ENCODE measurements at regions of chr2 and their contacts with region 1.

Region 1: DNA sequence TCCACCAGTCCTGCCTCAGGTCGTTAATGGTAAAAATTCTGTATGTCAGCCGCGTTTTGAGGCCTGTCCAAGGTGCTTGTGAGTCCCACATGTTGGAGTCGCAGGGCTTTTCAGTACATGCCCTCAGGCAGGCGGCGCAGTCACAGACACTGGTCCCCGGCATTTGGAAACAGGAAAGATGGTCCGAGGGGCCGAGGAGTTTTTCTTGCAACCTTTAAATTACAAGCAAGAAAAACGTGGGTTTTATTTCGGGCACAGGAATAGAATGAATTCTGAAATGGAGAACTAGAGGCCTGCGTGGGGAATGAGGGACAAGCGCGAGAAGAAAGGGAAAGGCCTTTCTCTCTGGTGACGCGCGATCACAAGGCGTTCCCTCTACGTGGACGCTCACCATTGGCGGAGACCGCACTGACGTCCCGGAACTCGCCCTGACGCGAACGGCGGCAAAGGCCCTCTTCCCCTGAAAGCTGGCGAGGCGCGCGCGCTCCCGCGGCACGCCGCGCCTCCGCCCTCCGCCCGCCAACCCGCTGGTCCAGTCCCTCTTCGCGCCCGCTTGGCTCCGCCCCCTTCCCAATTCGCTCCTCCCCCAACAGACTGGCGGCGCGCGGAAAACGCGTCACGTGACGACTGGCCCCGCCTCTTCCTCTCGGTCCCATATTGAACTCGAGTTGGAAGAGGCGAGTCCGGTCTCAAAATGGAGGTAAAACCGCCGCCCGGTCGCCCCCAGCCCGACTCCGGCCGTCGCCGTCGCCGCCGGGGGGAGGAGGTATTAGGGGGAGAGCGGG is at the start of gene HNRNPA3:
- DNase-seq: peak; percentile 100
- ATAC-seq: peak; percentile 88
- H3K4me3 Mint-ChIP-seq: peak within 1 kb of the TSS; percentile 92
- H3K27ac Mint-ChIP-seq: peak within 1 kb of the TSS; percentile 99
- H3K4me1 Mint-ChIP-seq: peaks cover 42% of the 10 kb centered on the region
- H3K27me3 Mint-ChIP-seq: no peaks in the 10 kb centered on the region
- total RNA-seq, gene HNRNPA3: 329 to 350 TPM

Region 2: DNA sequence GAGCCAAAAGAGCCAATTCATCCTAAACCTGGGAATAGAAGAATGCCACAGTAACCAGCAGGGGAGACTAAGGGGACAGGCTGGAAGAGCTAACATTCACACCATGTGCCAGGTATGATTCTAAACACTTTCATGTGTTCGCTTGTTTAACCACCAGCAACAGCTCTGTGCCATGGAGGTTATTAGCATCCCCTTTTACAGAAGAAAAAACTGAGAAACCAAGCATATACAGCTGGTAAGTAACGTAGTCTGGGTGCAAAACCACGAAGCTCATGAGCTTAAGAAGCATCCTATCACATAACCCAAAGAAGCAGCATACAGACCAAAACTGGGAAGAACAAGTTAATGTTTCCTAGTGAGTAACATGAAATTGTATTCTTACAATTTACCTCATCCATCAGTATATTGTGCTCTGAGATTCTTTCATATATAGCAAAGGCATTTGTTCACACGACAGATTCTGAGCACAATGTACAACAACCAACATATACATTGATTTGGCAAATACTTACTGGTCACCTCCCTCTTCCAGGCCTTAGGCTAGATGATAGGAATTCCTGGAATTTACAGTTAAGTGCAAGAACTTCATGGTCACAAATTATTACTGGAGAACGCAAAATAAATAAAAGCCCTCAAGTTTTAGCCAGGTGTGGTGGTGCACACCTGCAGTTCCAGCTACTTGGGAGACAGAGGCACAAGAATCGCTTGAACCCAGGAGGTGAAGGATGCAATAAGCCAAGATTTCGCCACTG is 36.2 kb before region 1 on chr2:
- CTCF ChIA-PET with region 1: no interaction called
- POLR2A ChIA-PET with region 1: no interaction called
- DNase-seq: no peak
- ATAC-seq: no peak
- H3K4me3 Mint-ChIP-seq: no peak overlapping the region
- H3K27ac Mint-ChIP-seq: no peak overlapping the region
- H3K4me1 Mint-ChIP-seq: no peaks in the 10 kb centered on the region
- H3K27me3 Mint-ChIP-seq: peaks cover 9% of the 10 kb centered on the region

Region 3: DNA sequence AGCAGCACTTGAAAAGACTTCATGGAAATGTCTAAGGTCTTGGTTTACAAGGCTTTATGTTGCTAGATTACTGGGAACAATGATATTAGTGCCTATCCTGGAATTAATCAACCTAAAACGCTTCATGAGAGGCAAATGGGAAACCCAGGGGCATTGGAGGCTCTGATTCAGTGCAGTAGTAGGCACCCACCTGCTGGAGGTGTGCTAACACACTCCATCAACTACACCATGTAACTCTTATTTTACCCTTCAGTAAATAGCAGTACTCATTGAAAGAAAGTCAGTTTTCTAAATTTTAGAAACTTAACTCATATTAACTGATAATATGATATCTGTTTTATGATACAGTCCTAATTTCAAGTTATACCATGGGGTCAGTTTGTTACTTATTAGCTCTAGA is 17.1 kb before region 1 on chr2:
- CTCF ChIA-PET with region 1: interaction called, 10 read pairs
- POLR2A ChIA-PET with region 1: interaction called, 5 read pairs
- DNase-seq: no peak
- ATAC-seq: no peak
- H3K4me3 Mint-ChIP-seq: no peak overlapping the region
- H3K27ac Mint-ChIP-seq: no peak overlapping the region
- H3K4me1 Mint-ChIP-seq: no peaks in the 10 kb centered on the region
- H3K27me3 Mint-ChIP-seq: no peaks in the 10 kb centered on the region

Region 4: GRCh38 chr2:177201919-177202346 is 10.4 kb before region 1 on chr2:
- CTCF ChIA-PET with region 1: interaction called, 10 read pairs
- POLR2A ChIA-PET with region 1: interaction called, 18 read pairs
- DNase-seq: no peak
- ATAC-seq: no peak
- H3K4me3 Mint-ChIP-seq: no peak overlapping the region
- H3K27ac Mint-ChIP-seq: no peak overlapping the region
- H3K4me1 Mint-ChIP-seq: peaks cover 2% of the 10 kb centered on the region
- H3K27me3 Mint-ChIP-seq: no peaks in the 10 kb centered on the region